ENCODE measurements at regions of chr11 and their contacts with region 1.

Region 1: DNA sequence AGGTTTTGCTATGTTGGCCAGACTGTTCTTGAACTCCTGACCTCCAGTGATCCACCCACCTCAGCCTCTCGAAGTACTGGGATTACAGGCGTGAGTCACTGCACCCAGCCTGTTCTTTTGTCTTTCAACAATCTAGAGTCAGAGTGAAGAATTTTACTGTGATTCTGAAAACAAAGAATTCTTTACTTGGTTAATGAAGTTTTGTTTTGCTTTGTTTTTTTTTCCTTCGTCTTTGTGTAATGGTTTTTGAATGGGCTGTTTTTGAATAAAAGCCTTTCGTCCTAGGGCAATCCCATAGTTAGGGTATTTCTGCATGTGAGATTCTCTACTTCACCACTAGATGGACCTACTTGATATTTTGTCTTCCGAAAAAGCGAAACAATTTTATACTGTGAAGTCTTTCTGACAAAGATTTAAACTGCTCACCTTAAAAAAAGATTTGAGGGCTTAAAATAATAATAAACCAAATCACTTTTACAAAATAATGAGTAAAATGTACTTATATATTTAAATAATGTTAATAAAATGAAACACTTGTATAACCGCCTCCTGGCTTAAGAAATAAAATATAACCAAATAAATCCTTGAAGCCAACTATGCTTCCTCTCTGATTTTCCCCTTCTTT is 43.4 kb upstream of the SC5D start:
- DNase-seq: no peak
- ATAC-seq: peak in 3 of 8 donors; percentile 57 to 67 (median 62)
- H3K4me3 ChIP-seq: no peak overlapping the region
- H3K27ac ChIP-seq: no peak overlapping the region
- H3K4me1 ChIP-seq: peaks cover 0 to 9% (median 0%) of the 10 kb centered on the region in 9 donors
- H3K27me3 ChIP-seq: peaks cover 0 to 6% (median 0%) of the 10 kb centered on the region in 7 donors
- CTCF ChIP-seq: peak; percentile 39 to 83 (median 76)

Region 2: GRCh38 chr11:121214861-121215260 is 34.3 kb before region 1 on chr11:
- intact Hi-C with region 1: loop called in 1 of 10 experiments (anchors 1 kb)
- DNase-seq: no peak
- ATAC-seq: no peak
- H3K4me3 ChIP-seq: no peak overlapping the region
- H3K27ac ChIP-seq: no peak overlapping the region
- H3K4me1 ChIP-seq: peaks cover 0 to 6% (median 0%) of the 10 kb centered on the region in 9 donors
- H3K27me3 ChIP-seq: peaks cover 0 to 8% (median 0%) of the 10 kb centered on the region in 7 donors
- CTCF ChIP-seq: no peak

Region 3: GRCh38 chr11:121591405-121592033 is 342.4 kb after region 1 on chr11:
- intact Hi-C with region 1: loop called (anchors 1 to 10 kb)
- DNase-seq: peak in 1 of 2 donors; percentile 76
- ATAC-seq: peak in 7 of 8 donors; percentile 74 to 85 (median 82)
- H3K4me3 ChIP-seq: no peak overlapping the region
- H3K27ac ChIP-seq: no peak overlapping the region
- H3K4me1 ChIP-seq: peaks cover 0 to 13% (median 0%) of the 10 kb centered on the region in 9 donors
- H3K27me3 ChIP-seq: no peaks in the 10 kb centered on the region
- CTCF ChIP-seq: peak; percentile 73 to 90 (median 85)